ENCODE measurements at regions of chr15 and their contacts with region 1.

Region 1: GRCh38 chr15:42056934-42057779 is 36.3 kb upstream of the PLA2G4E start:
- DNase-seq: no peak
- H3K4me3 ChIP-seq: no peak overlapping the region
- H3K27me3 ChIP-seq: peaks cover 18% of the 10 kb centered on the region
- CTCF ChIP-seq: peak; percentile 68

Region 2: DNA sequence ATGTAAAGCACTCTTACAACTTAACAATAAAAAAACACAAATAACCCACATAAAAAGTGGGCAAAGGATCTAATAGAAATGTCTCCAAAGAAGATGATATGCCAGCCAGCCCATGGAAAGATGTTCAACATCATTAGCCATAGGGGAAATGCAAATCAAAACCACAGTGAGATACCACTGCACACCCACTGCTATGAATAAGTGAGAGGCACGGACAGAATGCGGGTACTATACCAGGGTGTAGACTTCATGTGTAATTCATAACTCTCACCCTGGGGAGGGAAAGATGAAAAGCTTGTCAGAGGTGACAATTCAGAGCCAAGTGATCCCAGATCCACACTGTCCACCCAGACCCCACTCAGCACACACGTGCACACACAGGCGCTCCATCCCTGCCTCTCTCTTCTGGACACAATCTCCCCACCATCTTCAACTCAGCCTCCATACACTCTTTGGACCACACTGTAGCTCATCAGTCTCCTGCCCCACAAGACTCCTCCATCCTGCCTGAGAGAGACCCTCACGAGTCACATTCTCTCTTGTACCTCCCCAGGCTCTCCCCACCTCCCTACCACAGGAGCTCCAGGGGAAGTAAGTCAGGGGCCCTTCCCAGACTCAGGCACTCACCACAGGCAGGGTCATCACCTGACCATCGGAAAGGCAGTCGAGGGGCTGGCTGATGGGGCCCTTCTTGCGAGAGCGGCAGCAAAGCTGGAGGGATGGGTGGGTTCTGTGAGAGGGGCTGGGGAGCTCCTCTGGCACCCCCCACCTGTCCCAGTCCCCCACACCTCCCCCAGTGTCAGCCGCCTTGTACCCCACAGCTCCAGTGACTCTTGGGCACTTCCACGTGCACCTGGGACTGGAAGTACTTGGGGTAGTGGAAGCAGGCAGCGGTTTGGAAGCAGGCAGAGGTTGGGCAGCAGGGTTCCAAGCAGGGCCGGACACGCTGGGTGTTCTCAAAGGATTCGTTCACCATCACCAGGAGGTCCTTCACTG is 57.6 kb before region 1 on chr15:
- CTCF ChIA-PET with region 1: interaction called, 12 read pairs
- POLR2A ChIA-PET with region 1: no interaction called
- DNase-seq: no peak
- H3K4me3 ChIP-seq: no peak overlapping the region
- H3K27me3 ChIP-seq: peaks cover 14% of the 10 kb centered on the region
- CTCF ChIP-seq: no peak

Region 3: GRCh38 chr15:42691308-42691707 is 634.2 kb after region 1 on chr15:
- CTCF ChIA-PET with region 1: no interaction called
- POLR2A ChIA-PET with region 1: no interaction called
- DNase-seq: no peak
- H3K4me3 ChIP-seq: no peak overlapping the region
- H3K27me3 ChIP-seq: no peaks in the 10 kb centered on the region
- CTCF ChIP-seq: no peak

Measured in BJ (cell line).